Activated B cell treated with CpG ODN at 0.5 μM for 24 hours (primary cell): ENCODE measurements at regions of chr3 and their contacts with region 1.

Region 1: GRCh38 chr3:114213627-114214541 is 23.5 kb downstream of the ZNF80 start:
- DNase-seq: peak; percentile 64
- ATAC-seq: peak; percentile 71
- H3K4me3 Mint-ChIP-seq: no peak overlapping the region
- H3K27ac Mint-ChIP-seq: no peak overlapping the region
- H3K4me1 Mint-ChIP-seq: peaks cover 27% of the 10 kb centered on the region
- H3K27me3 Mint-ChIP-seq: no peaks in the 10 kb centered on the region
- CTCF ChIP-seq: no peak

Region 2: DNA sequence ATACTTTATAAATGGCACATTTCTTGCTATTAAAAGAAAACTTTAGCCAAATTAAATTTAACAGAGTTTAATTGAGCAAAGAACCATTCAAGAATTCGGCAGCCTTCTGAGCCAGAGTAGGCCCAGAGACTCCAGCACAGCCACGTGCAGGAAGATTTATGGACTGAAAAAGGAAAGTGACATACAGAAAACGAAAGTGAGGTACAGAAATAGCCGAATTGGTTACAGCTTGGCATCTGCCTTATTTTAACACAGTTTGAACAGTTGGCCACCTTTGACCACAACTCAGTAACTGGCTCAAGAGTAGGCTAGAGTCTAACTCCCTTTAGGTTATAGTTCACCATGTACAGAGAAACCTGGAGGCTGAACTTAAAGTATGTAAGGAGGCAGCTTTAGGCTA is 790.2 kb before region 1 on chr3:
- CTCF ChIA-PET with region 1: no interaction called
- POLR2A ChIA-PET with region 1: no interaction called
- intact Hi-C with region 1: no loop called
- DNase-seq: no peak
- ATAC-seq: peak; percentile 42
- H3K4me3 Mint-ChIP-seq: no peak overlapping the region
- H3K27ac Mint-ChIP-seq: peak overlapping the region; percentile 14
- H3K4me1 Mint-ChIP-seq: peaks cover 33% of the 10 kb centered on the region
- H3K27me3 Mint-ChIP-seq: no peaks in the 10 kb centered on the region
- CTCF ChIP-seq: no peak

Region 3: DNA sequence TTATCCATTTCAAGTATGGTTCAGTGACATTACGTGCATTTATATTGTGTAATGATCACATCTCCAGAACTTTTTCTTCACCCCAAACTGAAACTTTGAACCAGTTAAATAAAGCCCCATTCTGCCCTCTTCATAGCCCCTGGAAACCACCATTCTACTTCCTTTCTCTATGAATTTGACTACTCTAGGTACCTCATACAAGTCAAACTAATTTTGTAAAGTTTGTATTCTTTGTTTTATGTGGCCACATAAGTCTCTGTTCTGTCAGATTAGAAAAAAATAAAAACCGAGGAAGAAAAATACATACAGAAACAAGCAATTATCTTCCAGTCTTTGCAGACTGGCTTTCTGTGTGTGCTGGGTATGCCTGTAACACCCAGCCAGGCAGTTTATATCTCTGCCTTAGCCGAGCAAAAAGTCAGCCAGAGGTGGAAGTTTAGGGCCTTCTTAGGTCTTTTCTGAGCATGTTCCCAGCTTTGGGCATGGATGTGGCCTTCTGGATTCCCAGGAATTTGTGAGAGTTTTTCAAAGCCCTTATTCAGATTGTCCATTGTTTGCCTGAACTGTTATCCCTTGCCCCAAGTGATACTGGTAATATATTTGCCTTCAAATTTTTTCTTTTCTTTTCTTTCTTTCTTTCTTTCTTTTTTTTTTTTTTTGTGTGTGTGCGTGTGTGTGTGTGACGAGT is 381.3 kb before region 1 on chr3:
- CTCF ChIA-PET with region 1: no interaction called
- POLR2A ChIA-PET with region 1: no interaction called
- intact Hi-C with region 1: loop called (anchors 5 kb)
- DNase-seq: no peak
- ATAC-seq: peak; percentile 29
- H3K4me3 Mint-ChIP-seq: peak overlapping the region; percentile 61
- H3K27ac Mint-ChIP-seq: peak overlapping the region; percentile 72
- H3K4me1 Mint-ChIP-seq: peaks cover 67% of the 10 kb centered on the region
- H3K27me3 Mint-ChIP-seq: no peaks in the 10 kb centered on the region
- CTCF ChIP-seq: no peak

Region 4: DNA sequence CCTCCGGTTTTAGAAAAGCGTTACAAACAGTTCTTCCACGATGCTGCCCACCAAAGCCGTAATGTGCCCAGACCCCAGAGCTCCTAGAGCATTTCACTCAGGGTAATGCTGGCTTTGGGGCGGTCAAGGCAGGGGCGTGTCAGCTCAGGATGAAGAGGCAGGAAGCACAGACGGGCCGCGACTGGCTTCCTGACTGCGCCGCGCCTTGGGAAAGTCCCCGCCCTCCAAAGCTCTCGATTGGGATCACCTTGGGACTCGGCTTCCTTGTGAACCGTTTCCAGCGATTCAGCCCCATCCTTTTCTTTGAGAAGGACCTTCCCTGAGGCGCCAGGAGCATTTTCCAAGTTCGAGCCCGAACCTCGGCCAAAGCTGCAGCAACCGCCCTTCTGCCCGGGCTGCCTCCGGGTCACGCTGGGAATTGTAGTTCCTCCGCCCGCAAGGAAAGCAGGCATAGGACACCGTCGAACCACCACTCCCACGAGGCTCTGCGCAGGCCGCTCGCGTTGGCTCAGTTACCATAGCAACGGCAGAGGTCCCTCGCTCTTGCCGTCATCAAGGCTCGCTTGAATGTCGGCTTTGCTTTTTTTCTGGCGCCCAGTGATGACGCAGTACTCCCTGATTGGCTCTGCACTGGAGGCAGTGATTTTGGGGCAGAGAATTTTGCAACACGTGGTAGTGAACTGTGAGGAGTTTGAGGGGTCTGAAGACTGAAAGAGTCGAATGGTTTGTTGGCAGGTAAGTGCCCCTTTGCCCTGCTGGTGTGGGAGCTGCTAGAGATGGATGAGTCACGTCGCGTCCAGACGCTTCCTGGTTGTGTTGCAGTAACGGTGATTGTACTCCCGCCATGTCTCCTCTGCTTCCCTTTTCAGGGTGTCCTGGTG is 157.5 kb before region 1 on chr3 and contains the starts of genes CCDC191 and QTRT2:
- CTCF ChIA-PET with region 1: no interaction called
- POLR2A ChIA-PET with region 1: interaction called, 8 read pairs
- intact Hi-C with region 1: loop called (anchors 1 kb)
- DNase-seq: peak; percentile 89
- ATAC-seq: peak; percentile 95
- H3K4me3 Mint-ChIP-seq: peak within 1 kb of the TSS; percentile 99
- H3K27ac Mint-ChIP-seq: peak within 1 kb of the TSS; percentile 99
- H3K4me1 Mint-ChIP-seq: peaks cover 55% of the 10 kb centered on the region
- H3K27me3 Mint-ChIP-seq: peaks cover 3% of the 10 kb centered on the region
- CTCF ChIP-seq: no peak
- total RNA-seq, gene CCDC191: 14.7 and 17.2 TPM in 2 replicates
- total RNA-seq, gene QTRT2: 63.1 and 75.5 TPM in 2 replicates

Region 5: GRCh38 chr3:114104414-114104813 is 109.5 kb before region 1 on chr3:
- CTCF ChIA-PET with region 1: no interaction called
- POLR2A ChIA-PET with region 1: no interaction called
- intact Hi-C with region 1: no loop called
- DNase-seq: no peak
- ATAC-seq: no peak
- H3K4me3 Mint-ChIP-seq: no peak overlapping the region
- H3K27ac Mint-ChIP-seq: no peak overlapping the region
- H3K4me1 Mint-ChIP-seq: no peaks in the 10 kb centered on the region
- H3K27me3 Mint-ChIP-seq: peaks cover 6% of the 10 kb centered on the region
- CTCF ChIP-seq: no peak

Region 6: DNA sequence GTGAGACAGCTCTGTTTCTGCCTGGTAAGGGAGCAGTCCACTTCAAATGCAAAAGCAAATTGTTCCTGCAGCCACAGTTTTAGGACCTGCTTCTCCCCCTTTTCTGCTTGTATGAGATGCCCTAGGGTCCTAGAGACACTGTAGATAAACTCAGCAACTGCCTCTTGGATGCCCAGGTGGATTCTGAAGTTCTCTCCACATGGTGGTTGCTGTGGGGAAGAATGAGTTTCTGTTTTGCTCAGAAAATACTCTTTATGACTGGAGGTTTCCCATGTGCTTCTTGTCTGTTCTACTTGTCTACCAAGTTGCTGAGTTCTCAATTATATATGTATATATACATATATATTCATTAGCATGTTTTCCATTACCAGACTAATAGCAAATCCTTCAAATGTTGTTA is 29.1 kb after region 1 on chr3:
- CTCF ChIA-PET with region 1: no interaction called
- POLR2A ChIA-PET with region 1: interaction called, 12 read pairs
- intact Hi-C with region 1: loop called (anchors 1 kb)
- DNase-seq: no peak
- ATAC-seq: peak; percentile 64
- H3K4me3 Mint-ChIP-seq: no peak overlapping the region
- H3K27ac Mint-ChIP-seq: no peak overlapping the region
- H3K4me1 Mint-ChIP-seq: peaks cover 25% of the 10 kb centered on the region
- H3K27me3 Mint-ChIP-seq: no peaks in the 10 kb centered on the region
- CTCF ChIP-seq: no peak

Region 7: GRCh38 chr3:114308830-114309229 is 94.9 kb after region 1 on chr3:
- CTCF ChIA-PET with region 1: interaction called, 6 read pairs
- POLR2A ChIA-PET with region 1: interaction called, 36 read pairs
- intact Hi-C with region 1: no loop called
- DNase-seq: no peak
- ATAC-seq: peak; percentile 87
- H3K4me3 Mint-ChIP-seq: peak overlapping the region; percentile 6
- H3K27ac Mint-ChIP-seq: peak overlapping the region; percentile 89
- H3K4me1 Mint-ChIP-seq: peaks cover 51% of the 10 kb centered on the region
- H3K27me3 Mint-ChIP-seq: no peaks in the 10 kb centered on the region
- CTCF ChIP-seq: no peak

Region 8: GRCh38 chr3:114383875-114384557 is 170.1 kb after region 1 on chr3:
- CTCF ChIA-PET with region 1: no interaction called
- POLR2A ChIA-PET with region 1: interaction called, 14 read pairs
- intact Hi-C with region 1: no loop called
- DNase-seq: peak; percentile 40
- ATAC-seq: peak; percentile 98
- H3K4me3 Mint-ChIP-seq: no peak overlapping the region
- H3K27ac Mint-ChIP-seq: no peak overlapping the region
- H3K4me1 Mint-ChIP-seq: peaks cover 4% of the 10 kb centered on the region
- H3K27me3 Mint-ChIP-seq: no peaks in the 10 kb centered on the region
- CTCF ChIP-seq: peak; percentile 68

Region 9: GRCh38 chr3:114484919-114485318 is 271.0 kb after region 1 on chr3:
- CTCF ChIA-PET with region 1: no interaction called
- POLR2A ChIA-PET with region 1: no interaction called
- intact Hi-C with region 1: no loop called
- DNase-seq: no peak
- ATAC-seq: no peak
- H3K4me3 Mint-ChIP-seq: no peak overlapping the region
- H3K27ac Mint-ChIP-seq: no peak overlapping the region
- H3K4me1 Mint-ChIP-seq: peaks cover 10% of the 10 kb centered on the region
- H3K27me3 Mint-ChIP-seq: no peaks in the 10 kb centered on the region
- CTCF ChIP-seq: no peak

Region 10: GRCh38 chr3:115147329-115148141 is 933.7 kb after region 1 on chr3:
- CTCF ChIA-PET with region 1: no interaction called
- POLR2A ChIA-PET with region 1: interaction called, 16 read pairs
- intact Hi-C with region 1: loop called (anchors 1 kb)
- DNase-seq: peak; percentile 81
- ATAC-seq: peak; percentile 77
- H3K4me3 Mint-ChIP-seq: peak overlapping the region; percentile 94
- H3K27ac Mint-ChIP-seq: peak overlapping the region; percentile 98
- H3K4me1 Mint-ChIP-seq: peaks cover 34% of the 10 kb centered on the region
- H3K27me3 Mint-ChIP-seq: no peaks in the 10 kb centered on the region
- CTCF ChIP-seq: no peak